Activated T-helper 1 cell treated with anti-CD3 and anti-CD28 coated beads, Interleukin-12 subunit alpha, Interleukin-12 subunit beta, Interleukin-2, Interleukin-4 antibody, amounts not matched to agents 30 ng/mL and 10 ng/mL and 1 ng/mL, durations not matched to agents 14 hours and 24 hours and 36 hours (primary cell): ENCODE measurements at regions of chr1 and their contacts with region 1.

Region 1: DNA sequence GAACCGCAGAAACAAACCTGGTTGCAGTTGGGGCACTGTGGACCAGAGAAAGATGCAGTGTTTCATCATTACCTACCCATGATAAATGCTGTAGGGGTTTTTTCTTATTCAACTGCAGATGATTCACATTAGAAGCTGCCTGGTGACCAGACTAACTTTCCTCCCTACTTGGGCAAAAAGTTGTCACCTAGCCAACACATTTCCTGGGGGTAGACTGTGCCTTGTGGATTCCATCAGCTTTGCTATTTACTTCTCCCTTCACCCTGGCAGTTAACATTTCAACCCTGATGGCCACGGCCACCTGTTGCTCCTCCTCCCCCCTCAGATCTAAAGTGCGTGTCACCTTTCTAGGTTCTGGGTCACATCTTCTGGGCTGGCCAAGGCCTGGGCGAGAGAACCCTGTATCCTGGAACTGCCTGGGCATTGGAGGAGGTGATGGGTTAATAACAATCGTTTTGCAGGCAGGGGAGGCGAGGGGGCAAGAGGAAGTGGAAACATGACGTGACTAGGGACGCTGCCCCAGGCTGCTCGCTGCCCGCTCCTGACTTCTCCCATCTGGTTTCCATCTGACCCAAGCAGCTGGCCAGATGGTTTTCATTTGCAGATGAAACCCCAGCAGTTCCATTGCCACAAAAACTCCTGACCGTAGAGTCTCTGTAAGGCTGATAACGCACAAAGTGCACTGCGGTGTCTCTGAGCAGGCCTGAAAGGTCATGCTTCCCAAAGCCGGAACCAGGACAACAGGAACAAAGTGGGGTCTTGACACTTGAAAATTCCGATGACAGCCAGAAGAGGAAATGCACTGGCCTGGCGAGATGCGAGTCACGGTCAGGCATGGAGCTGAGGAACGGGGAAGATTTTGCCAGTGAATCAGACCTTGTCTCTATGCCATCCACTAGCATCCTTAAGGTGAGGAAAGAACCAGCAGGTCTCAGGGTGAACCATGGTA is 36.6 kb downstream of the CAPZB start:
- DNase-seq: no peak
- H3K4me3 Mint-ChIP-seq: peak overlapping the region; percentile 24
- H3K27ac Mint-ChIP-seq: peak overlapping the region; percentile 91
- H3K4me1 Mint-ChIP-seq: peaks cover 84% of the 10 kb centered on the region
- H3K27me3 Mint-ChIP-seq: no peaks in the 10 kb centered on the region

Region 2: DNA sequence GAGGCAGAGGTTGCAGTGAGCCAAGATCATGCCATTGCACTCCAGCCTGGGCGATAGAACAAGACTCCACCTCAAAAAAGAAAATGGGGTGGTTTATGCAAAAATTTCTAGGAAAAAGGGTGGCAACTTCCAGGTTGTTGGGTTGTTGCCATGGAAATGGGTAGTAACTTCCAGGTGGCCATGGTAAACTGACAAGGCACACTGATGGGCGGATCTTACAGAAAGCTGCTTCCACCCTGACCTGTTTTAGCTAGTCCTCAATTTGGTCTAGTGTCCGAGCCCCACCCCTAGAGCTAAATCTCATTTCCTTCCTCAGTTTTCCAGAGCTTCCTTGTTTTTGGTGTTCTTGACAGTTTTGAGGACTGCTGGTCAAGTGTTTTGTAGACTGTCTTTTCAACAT is 954.5 kb before region 1 on chr1:
- intact Hi-C with region 1: no loop called
- DNase-seq: no peak
- H3K4me3 Mint-ChIP-seq: no peak overlapping the region
- H3K27ac Mint-ChIP-seq: no peak overlapping the region
- H3K4me1 Mint-ChIP-seq: no peaks in the 10 kb centered on the region
- H3K27me3 Mint-ChIP-seq: peaks cover 2% of the 10 kb centered on the region

Region 3: GRCh38 chr1:18913065-18913835 is 535.5 kb before region 1 on chr1:
- intact Hi-C with region 1: no loop called
- DNase-seq: peak; percentile 62
- H3K4me3 Mint-ChIP-seq: no peak overlapping the region
- H3K27ac Mint-ChIP-seq: no peak overlapping the region
- H3K4me1 Mint-ChIP-seq: peaks cover 6% of the 10 kb centered on the region
- H3K27me3 Mint-ChIP-seq: no peaks in the 10 kb centered on the region

Region 4: GRCh38 chr1:19311959-19312781 is 136.6 kb before region 1 on chr1 and contains the starts of genes AKR7A2 and SLC66A1:
- intact Hi-C with region 1: no loop called
- DNase-seq: peak; percentile 93
- H3K4me3 Mint-ChIP-seq: peak within 1 kb of the TSS; percentile 91
- H3K27ac Mint-ChIP-seq: peak within 1 kb of the TSS; percentile 87
- H3K4me1 Mint-ChIP-seq: peaks cover 30% of the 10 kb centered on the region
- H3K27me3 Mint-ChIP-seq: no peaks in the 10 kb centered on the region
- total RNA-seq, gene AKR7A2: 30.0 and 31.1 TPM in 2 replicates
- total RNA-seq, gene SLC66A1: 9.9 and 12.0 TPM in 2 replicates

Region 5: GRCh38 chr1:19436716-19437476 is 11.9 kb before region 1 on chr1:
- intact Hi-C with region 1: loop called (anchors 1 kb)
- DNase-seq: no peak
- H3K4me3 Mint-ChIP-seq: peak overlapping the region; percentile 30
- H3K27ac Mint-ChIP-seq: peak overlapping the region; percentile 83
- H3K4me1 Mint-ChIP-seq: peaks cover 81% of the 10 kb centered on the region
- H3K27me3 Mint-ChIP-seq: no peaks in the 10 kb centered on the region

Region 6: GRCh38 chr1:19462781-19463503 is 14.2 kb after region 1 on chr1:
- intact Hi-C with region 1: loop called (anchors 1 kb)
- DNase-seq: peak; percentile 65
- H3K4me3 Mint-ChIP-seq: peak overlapping the region; percentile 79
- H3K27ac Mint-ChIP-seq: peak overlapping the region; percentile 85
- H3K4me1 Mint-ChIP-seq: peaks cover 81% of the 10 kb centered on the region
- H3K27me3 Mint-ChIP-seq: no peaks in the 10 kb centered on the region

Region 7: GRCh38 chr1:19468397-19468956 is 19.7 kb after region 1 on chr1:
- intact Hi-C with region 1: loop called (anchors 2 kb)
- DNase-seq: peak; percentile 48
- H3K4me3 Mint-ChIP-seq: peak overlapping the region; percentile 45
- H3K27ac Mint-ChIP-seq: peak overlapping the region; percentile 88
- H3K4me1 Mint-ChIP-seq: peaks cover 88% of the 10 kb centered on the region
- H3K27me3 Mint-ChIP-seq: no peaks in the 10 kb centered on the region

Region 8: DNA sequence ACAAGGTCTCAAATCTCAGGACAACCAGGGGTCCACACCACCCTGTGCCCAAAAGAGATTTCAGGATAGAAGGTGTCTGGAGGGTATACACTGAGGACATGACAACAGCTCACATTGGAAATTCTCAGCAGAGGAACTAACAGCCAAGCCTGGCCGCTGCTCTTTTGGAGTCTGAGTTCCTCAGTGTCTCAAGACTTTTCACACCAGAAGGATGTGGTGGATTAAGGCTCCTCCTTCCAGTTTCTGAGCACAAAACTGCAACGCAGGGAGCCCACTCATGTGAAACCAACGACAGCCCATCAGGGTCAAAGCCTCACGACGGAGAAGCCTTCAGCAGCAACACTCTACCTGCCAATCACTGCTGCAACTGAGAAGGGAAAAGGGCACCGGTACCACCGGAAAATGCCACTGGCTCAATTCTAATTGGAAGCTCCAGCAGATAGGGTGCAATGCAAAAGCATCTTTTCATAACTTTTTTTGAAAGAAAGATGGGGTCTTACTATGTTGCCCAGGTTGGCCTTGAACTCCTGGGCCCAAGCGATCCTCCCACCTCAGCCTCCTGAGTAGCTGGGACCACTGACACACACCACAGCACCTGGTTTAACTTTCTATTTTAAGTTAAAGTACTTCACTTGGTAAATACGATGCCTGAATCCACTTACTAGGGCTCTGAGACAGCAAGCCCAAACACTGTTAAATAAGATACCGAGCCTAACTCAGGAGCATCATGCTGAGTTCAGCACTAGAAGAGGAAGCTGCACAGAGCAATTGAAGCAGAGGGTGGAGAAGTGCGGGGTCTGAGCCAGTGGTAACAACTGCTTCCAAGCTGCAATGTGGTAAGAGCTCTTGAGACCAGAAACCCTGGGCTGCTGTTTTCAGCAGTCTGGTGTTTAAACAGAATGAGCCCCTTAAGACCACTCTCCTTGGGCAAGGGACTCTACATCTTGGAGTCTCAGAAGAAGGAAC is 28.8 kb after region 1 on chr1:
- intact Hi-C with region 1: loop called (anchors 1 kb)
- DNase-seq: no peak
- H3K4me3 Mint-ChIP-seq: peak overlapping the region; percentile 75
- H3K27ac Mint-ChIP-seq: peak overlapping the region; percentile 91
- H3K4me1 Mint-ChIP-seq: peaks cover 94% of the 10 kb centered on the region
- H3K27me3 Mint-ChIP-seq: no peaks in the 10 kb centered on the region

Region 9: GRCh38 chr1:19582302-19582701 is 133.5 kb after region 1 on chr1:
- intact Hi-C with region 1: loop called (anchors 5 kb)
- DNase-seq: peak; percentile 54
- H3K4me3 Mint-ChIP-seq: no peak overlapping the region
- H3K27ac Mint-ChIP-seq: peak overlapping the region; percentile 25
- H3K4me1 Mint-ChIP-seq: peaks cover 7% of the 10 kb centered on the region
- H3K27me3 Mint-ChIP-seq: peaks cover 24% of the 10 kb centered on the region